HEK293 (cell line): ENCODE measurements at regions of chr9 and their contacts with region 1.

Region 1: GRCh38 chr9:35553670-35554543 is 51.2 kb upstream of the TESK1 start:
- H3K4me3 ChIP-seq: no peak overlapping the region
- H3K27ac ChIP-seq: no peak overlapping the region
- H3K4me1 ChIP-seq: 0 out of 2 replicates have a peak, but pooled peaks cover 3% of the 10 kb centered on the region
- CTCF ChIP-seq: peak; percentile 67

Region 2: GRCh38 chr9:35116898-35117551 is 436.9 kb before region 1 on chr9:
- CTCF ChIA-PET with region 1: interaction called, 25 read pairs
- POLR2A ChIA-PET with region 1: interaction called, 3 read pairs
- H3K4me3 ChIP-seq: peak overlapping the region; percentile 48
- H3K27ac ChIP-seq: no peak overlapping the region
- H3K4me1 ChIP-seq: peaks cover 15% of the 10 kb centered on the region
- CTCF ChIP-seq: peak; percentile 79

Region 3: GRCh38 chr9:35385042-35385441 is 168.9 kb before region 1 on chr9:
- CTCF ChIA-PET with region 1: no interaction called
- POLR2A ChIA-PET with region 1: no interaction called
- H3K4me3 ChIP-seq: no peak overlapping the region
- H3K27ac ChIP-seq: no peak overlapping the region
- H3K4me1 ChIP-seq: no peaks in the 10 kb centered on the region
- CTCF ChIP-seq: no peak

Region 4: GRCh38 chr9:35481347-35481975 is 72.4 kb before region 1 on chr9:
- CTCF ChIA-PET with region 1: interaction called, 80 read pairs
- POLR2A ChIA-PET with region 1: interaction called, 3 read pairs
- H3K4me3 ChIP-seq: no peak overlapping the region
- H3K27ac ChIP-seq: no peak overlapping the region
- H3K4me1 ChIP-seq: no peaks in the 10 kb centered on the region
- CTCF ChIP-seq: no peak

Region 5: GRCh38 chr9:35510745-35511428 is 43.0 kb before region 1 on chr9:
- CTCF ChIA-PET with region 1: interaction called, 89 read pairs
- POLR2A ChIA-PET with region 1: interaction called, 3 read pairs
- H3K4me3 ChIP-seq: no peak overlapping the region
- H3K27ac ChIP-seq: no peak overlapping the region
- H3K4me1 ChIP-seq: no peaks in the 10 kb centered on the region
- CTCF ChIP-seq: no peak

Region 6: DNA sequence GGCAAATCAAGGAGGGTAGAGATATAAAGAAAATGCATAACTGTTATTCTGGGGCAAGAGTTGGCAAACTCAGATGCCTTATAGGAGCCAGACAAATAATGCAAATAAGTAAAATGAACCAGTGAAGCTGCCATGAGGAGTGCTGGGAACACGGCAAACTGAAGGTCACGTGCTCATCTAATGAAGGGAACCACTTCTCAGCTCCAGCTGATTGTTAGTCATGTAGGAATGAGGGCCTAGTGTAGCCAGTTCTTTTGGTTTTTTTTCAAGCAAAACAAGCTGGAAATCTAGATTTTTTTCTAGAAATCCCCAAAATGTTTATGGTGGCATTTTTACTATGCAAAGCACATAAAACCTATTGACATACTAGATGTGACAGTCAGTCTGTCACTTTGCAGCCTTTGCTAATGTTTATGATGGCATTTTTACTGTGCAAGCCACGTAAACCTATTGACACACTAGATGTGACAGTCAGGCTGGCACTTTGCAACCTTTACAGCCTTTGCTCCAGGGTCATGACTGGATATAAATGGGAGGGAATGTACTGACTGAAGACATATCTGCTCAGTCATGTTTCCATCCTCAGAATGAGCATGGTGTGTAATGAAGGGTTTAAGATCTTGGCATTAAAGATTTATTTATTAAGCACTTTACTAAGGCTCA is 24.6 kb before region 1 on chr9:
- CTCF ChIA-PET with region 1: interaction called, 22 read pairs
- POLR2A ChIA-PET with region 1: no interaction called
- H3K4me3 ChIP-seq: no peak overlapping the region
- H3K27ac ChIP-seq: no peak overlapping the region
- H3K4me1 ChIP-seq: peaks cover 4% of the 10 kb centered on the region
- CTCF ChIP-seq: no peak

Region 7: DNA sequence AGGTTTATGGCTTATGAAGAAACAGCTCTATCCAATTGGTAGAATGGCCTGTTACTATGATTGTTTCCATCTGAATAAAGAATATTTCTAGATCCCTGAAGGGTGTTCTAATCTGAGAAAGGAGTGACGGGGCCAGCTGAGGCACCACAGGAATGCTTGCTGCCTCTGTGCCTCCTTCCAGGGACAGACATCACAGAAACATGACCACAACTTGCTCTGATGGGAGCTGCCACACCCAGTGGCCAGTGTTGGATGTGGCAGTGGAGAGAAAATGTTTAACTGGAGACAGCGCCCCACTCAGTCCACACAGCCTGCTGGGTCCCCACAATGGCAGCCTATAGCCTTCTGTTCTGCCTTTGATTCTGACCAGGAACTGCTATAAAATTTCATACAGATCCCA is 12.5 kb after region 1 on chr9:
- CTCF ChIA-PET with region 1: interaction called, 24 read pairs
- POLR2A ChIA-PET with region 1: no interaction called
- H3K4me3 ChIP-seq: no peak overlapping the region
- H3K27ac ChIP-seq: no peak overlapping the region
- H3K4me1 ChIP-seq: no peaks in the 10 kb centered on the region
- CTCF ChIP-seq: no peak